ENCODE measurements at regions of chr2 and their contacts with region 1.

Region 1: DNA sequence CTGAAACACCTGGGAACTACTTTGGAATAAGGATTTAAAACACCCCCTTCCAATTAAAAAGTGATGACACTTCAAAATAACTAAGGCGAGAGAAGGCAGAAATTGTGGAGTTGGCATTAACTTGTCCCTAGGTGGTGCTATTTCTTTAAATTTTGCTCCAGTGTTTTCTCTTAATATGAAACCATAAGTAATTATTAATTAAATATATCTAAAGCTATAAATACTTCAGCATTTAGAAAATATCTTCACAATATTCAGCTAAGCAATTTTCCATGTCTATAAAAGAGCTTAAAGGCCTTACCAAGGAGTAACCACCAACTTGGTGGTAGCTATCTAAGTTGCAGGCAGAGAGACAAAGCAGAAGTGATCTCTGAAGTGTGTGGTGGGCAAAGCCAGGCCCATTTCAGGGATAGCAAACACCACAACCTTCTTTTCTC is 186.8 kb upstream of the PGAP1 start:
- DNase-seq: no peak
- H3K4me3 ChIP-seq: no peak overlapping the region
- H3K27ac ChIP-seq: no peak overlapping the region
- H3K4me1 ChIP-seq: no peaks in the 10 kb centered on the region
- H3K27me3 ChIP-seq: no peaks in the 10 kb centered on the region
- CTCF ChIP-seq: peak; percentile 60

Region 2: DNA sequence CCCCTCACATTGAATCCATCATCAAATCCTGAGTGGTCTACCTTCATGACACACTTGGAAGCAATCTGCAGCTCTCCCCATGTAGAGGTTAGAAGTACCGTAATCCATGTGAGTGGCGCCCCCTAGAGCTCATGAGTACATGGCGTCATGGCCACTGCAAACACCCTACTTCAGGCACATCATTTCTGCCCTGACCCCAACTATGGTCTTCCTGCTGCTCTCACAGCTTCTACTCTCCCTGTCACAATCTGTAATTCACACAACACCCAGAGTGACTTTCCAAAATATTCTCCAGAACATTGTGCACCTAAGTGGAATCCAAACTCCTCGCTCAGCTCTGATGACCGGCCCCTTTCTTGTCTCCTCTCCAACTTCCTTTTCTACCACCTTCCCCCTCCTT is 55.4 kb after region 1 on chr2:
- intact Hi-C with region 1: loop called (anchors 5 kb)
- DNase-seq: peak; percentile 84
- H3K4me3 ChIP-seq: no peak overlapping the region
- H3K27ac ChIP-seq: no peak overlapping the region
- H3K4me1 ChIP-seq: no peaks in the 10 kb centered on the region
- H3K27me3 ChIP-seq: no peaks in the 10 kb centered on the region
- CTCF ChIP-seq: peak; percentile 61

Region 3: DNA sequence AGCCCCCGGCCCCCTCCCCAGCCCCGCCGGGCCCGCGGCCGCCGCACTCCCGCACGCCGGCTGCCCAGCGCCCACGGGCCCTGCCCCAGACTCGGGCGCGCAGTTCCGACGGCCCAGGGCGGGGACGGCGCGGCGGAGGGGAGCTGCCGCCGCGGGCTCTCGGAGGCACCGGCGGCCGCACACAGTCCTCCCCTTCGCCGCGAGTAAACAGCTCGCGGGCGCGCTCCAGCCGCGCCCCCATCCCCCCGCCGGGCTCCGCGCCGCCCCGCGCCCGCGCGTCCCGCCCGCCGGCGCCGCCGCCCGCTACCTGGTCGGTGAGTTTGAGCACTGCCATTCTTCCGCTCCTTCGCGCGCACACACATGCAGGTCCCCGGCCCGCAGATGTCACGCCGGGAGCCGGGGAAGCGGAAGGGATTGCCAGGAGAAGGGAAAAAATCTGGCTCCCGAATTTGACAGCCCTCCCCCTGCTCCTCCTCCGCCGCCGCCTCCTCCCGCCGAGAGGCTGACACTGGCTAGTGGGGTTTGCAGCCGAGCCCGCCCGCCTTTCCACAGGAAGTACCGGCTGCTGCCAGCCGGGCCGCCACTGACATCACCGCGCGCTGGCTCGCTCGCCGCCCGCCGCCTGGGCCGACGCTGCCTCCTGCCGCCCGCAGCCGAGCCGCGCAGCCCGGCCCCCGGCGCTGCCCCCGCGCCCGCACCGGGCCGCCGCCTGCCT is 197.1 kb after region 1 on chr2 and contains the start of gene ANKRD44:
- intact Hi-C with region 1: loop called (anchors 5 kb)
- DNase-seq: peak; percentile 87
- H3K4me3 ChIP-seq: peak within 1 kb of the TSS; percentile 59
- H3K27ac ChIP-seq: peak within 1 kb of the TSS; percentile 60
- H3K4me1 ChIP-seq: no peaks in the 10 kb centered on the region
- H3K27me3 ChIP-seq: no peaks in the 10 kb centered on the region
- CTCF ChIP-seq: no peak
- total RNA-seq, gene ANKRD44: 7.0 to 7.9 TPM

Region 4: DNA sequence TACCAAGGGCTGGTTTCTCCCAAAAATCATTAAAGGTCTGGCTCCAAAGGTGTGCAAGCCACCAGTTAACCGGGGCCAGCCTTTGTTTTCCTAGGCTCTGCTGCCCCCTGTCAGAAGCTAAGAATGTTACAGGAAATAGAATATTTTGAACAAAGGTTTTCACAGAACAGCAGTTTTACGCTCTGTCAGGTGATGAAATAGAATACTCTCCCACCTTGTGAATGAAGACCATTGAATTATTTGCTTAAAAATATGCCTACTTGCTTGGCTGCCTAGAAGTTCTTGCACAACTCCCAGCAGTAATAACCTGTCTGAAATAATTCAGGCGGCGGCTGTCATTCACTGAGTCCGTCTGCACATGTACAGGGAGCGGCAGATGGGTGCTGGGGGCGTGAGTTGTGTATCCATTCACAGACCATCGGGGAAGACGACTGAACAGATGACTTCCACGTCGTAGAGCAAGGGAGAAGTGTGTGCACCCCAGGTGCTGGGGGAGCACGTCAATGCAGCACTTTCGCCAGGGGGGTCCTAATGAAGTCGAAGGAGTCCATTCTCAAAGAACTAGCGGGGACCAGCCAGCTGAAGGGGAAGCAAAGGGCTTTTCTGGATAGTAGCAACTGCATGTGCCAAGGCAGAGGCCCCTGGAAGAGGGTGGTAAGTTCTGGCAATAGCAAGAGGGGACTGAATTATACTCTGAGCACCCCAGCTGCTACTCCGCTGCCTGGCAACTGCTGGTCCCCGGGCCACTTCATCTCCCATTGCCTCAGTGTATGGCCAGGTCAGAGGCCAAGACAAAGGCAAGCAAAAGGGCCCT is 265.4 kb after region 1 on chr2:
- intact Hi-C with region 1: loop called (anchors 5 kb)
- DNase-seq: peak; percentile 53
- H3K4me3 ChIP-seq: no peak overlapping the region
- H3K27ac ChIP-seq: no peak overlapping the region
- H3K4me1 ChIP-seq: no peaks in the 10 kb centered on the region
- H3K27me3 ChIP-seq: no peaks in the 10 kb centered on the region
- CTCF ChIP-seq: peak; percentile 63

Measured in colonic mucosa (tissue), 4 donors.